ENCODE measurements at regions of chr17 and their contacts with region 1.

Region 1: GRCh38 chr17:63929860-63930766 is 2.0 kb downstream of the CD79B start:
- DNase-seq: peak; percentile 84
- H3K4me3 ChIP-seq: peak overlapping the region; percentile 51 to 95 (median 72)
- H3K27ac ChIP-seq: peak overlapping the region; percentile 80 to 94 (median 86)
- H3K4me1 ChIP-seq: peaks cover 37 to 100% (median 90%) of the 10 kb centered on the region in 6 donors
- H3K27me3 ChIP-seq: no peaks in the 10 kb centered on the region
- CTCF ChIP-seq: no peak
- POLR2A ChIP-seq: no peak

Region 2: GRCh38 chr17:63984651-63985386 is 54.7 kb after region 1 on chr17:
- intact Hi-C with region 1: loop called (anchors 10 kb)
- DNase-seq: no peak
- H3K4me3 ChIP-seq: no peak overlapping the region
- H3K27ac ChIP-seq: peak overlapping the region; percentile 36 to 83 (median 73)
- H3K4me1 ChIP-seq: peaks cover 26 to 88% (median 74%) of the 10 kb centered on the region in 6 donors
- H3K27me3 ChIP-seq: no peaks in the 10 kb centered on the region
- CTCF ChIP-seq: no peak
- POLR2A ChIP-seq: no peak

Region 3: GRCh38 chr17:63998050-63998720 is 68.1 kb after region 1 on chr17 and contains the start of gene PRR29:
- intact Hi-C with region 1: no loop called
- DNase-seq: peak; percentile 93
- H3K4me3 ChIP-seq: peak within 1 kb of the TSS; percentile 60 to 82 (median 72)
- H3K27ac ChIP-seq: peak within 1 kb of the TSS in 7 of 8 donors; percentile 35 to 82 (median 73)
- H3K4me1 ChIP-seq: peaks cover 8 to 76% (median 55%) of the 10 kb centered on the region in 6 donors
- H3K27me3 ChIP-seq: peaks cover 0 to 26% (median 0%) of the 10 kb centered on the region in 7 donors
- CTCF ChIP-seq: peak in 1 of 11 experiments; percentile 5
- POLR2A ChIP-seq: no peak
- total RNA-seq, gene PRR29: 1.6 to 9.1 (median 3.5) TPM

Measured in spleen (tissue), 13 donors.